Heart right ventricle (tissue), 16 donors: ENCODE measurements at regions of chr2 and their contacts with region 1.

Region 1: DNA sequence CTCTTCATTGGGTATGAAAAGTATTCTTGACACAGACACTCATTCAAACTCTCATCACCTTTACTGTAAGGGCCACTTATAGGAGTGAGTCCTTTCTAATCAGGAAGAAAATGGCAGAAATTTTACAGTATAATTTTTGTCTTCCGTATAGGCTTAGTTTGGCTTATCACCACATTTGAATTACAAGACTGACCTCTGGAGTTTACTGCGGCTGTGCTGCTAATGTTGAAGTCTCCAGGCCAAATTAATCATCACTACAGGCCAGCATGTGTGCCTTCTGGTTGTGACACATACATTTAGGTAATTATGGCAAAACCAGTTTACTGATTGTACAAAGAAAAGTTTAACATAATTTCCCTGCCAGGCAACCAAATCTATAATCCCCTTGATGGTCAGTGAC is 753.6 kb upstream of the GCFC2 start:
- DNase-seq: no peak
- ATAC-seq: no peak
- H3K4me3 ChIP-seq: no peak overlapping the region
- H3K27ac ChIP-seq: no peak overlapping the region
- H3K4me1 ChIP-seq: no peaks in the 10 kb centered on the region
- H3K27me3 ChIP-seq: no peaks in the 10 kb centered on the region
- CTCF ChIP-seq: peak in 1 of 9 donors; percentile 27

Region 2: DNA sequence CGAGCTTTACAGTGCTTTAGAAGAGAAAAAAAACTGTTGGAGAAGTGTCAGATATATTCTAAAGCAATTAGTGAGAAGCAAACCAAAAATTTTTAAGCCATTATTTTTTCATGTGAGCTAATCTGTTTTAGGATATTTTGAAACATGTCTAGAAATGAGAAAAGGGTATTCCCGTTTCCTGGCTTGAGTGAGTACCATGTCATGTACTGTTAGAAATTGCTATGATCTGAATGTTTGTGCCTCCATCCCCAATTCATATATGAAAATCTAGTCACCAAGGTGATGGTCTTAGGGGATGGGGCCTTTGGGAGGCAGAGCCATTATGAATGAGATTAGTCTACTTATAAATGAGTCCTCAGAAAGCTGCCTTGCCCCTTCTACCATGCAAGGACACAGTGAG is 260.3 kb before region 1 on chr2:
- intact Hi-C with region 1: loop called in 2 of 10 experiments (anchors 5 to 10 kb)
- DNase-seq: no peak
- ATAC-seq: no peak
- H3K4me3 ChIP-seq: no peak overlapping the region
- H3K27ac ChIP-seq: no peak overlapping the region
- H3K4me1 ChIP-seq: no peaks in the 10 kb centered on the region
- H3K27me3 ChIP-seq: no peaks in the 10 kb centered on the region
- CTCF ChIP-seq: no peak